ENCODE measurements at regions of chr12 and their contacts with region 1.

Region 1: DNA sequence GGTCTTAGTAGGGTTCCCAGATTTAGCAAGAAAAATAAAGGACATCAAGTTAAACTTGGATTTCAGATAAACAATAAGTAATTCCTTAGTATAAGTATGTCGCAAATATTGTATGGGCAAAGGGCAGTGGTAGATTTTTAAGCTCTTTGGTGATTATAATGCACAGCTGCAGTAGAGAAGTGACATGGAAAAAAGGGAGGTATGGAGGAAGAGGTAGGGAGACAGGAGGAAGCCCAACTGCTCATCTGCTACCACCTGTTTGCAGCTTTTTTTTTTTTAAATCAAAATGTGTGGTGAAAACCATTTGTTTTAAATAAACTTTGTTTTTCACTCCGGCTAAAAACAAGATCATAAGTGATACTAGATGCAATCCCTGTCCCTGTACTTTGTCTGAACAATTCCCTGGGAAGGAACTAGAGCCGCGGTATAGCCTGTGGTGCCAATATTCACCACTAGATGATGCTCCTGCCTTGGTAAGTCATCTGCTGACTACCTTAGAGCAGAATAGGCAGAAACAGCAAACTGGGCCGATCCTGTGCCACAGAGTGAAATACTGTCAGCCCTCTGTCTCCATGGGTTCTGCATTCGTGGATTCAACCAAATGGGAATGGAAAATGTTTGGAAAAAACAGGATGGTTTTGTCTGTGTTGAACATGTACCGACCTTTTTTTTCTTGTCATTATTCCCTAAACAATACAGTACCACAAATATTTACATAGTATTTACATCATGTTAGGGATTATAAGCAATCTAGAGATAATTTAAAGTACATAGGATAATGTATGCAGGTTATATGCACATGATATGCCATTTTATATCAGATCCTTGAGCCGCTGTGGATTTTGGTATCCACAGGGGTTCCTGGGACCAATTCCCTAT is 62.4 kb upstream of the PLBD1 start:
- DNase-seq: peak; percentile 42
- H3K4me3 Mint-ChIP-seq: no peak overlapping the region
- H3K27ac Mint-ChIP-seq: no peak overlapping the region
- H3K4me1 Mint-ChIP-seq: no peaks in the 10 kb centered on the region
- H3K27me3 Mint-ChIP-seq: peaks cover 10% of the 10 kb centered on the region

Region 2: DNA sequence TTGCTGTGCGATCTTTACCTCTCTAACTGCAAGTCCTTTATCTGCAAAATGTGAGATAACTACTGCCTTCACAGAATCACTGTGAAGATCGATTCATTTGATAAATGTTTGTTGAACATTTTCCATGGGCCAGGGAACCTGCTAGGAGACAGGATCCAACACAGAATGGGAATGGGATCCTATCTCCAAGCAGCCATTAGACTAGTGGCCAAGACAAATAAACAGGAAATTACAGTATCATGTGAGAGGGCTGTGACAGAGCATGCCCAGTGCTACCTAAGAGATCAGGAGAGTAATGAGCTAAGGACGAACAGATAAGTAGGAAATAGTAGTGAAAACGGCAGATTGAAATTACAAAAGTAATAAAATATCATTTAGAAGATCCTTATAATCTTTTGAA is 754.3 kb before region 1 on chr12:
- intact Hi-C with region 1: no loop called
- DNase-seq: no peak
- H3K4me3 Mint-ChIP-seq: no peak overlapping the region
- H3K27ac Mint-ChIP-seq: no peak overlapping the region
- H3K4me1 Mint-ChIP-seq: no peaks in the 10 kb centered on the region
- H3K27me3 Mint-ChIP-seq: peaks cover 5% of the 10 kb centered on the region

Region 3: GRCh38 chr12:14664510-14664909 is 34.4 kb after region 1 on chr12:
- intact Hi-C with region 1: loop called (anchors 1 kb)
- DNase-seq: no peak
- H3K4me3 Mint-ChIP-seq: no peak overlapping the region
- H3K27ac Mint-ChIP-seq: no peak overlapping the region
- H3K4me1 Mint-ChIP-seq: peaks cover 5% of the 10 kb centered on the region
- H3K27me3 Mint-ChIP-seq: peaks cover 7% of the 10 kb centered on the region

Region 4: GRCh38 chr12:14716848-14717444 is 86.9 kb after region 1 on chr12:
- intact Hi-C with region 1: loop called (anchors 1 kb)
- DNase-seq: peak; percentile 34
- H3K4me3 Mint-ChIP-seq: no peak overlapping the region
- H3K27ac Mint-ChIP-seq: no peak overlapping the region
- H3K4me1 Mint-ChIP-seq: no peaks in the 10 kb centered on the region
- H3K27me3 Mint-ChIP-seq: peaks cover 9% of the 10 kb centered on the region

Measured in activated T-helper 1 cell treated with anti-CD3 and anti-CD28 coated beads, Interleukin-12 subunit alpha, Interleukin-12 subunit beta, Interleukin-2, Interleukin-4 antibody, amounts not matched to agents 30 ng/mL and 10 ng/mL and 1 ng/mL, durations not matched to agents 14 hours and 24 hours and 36 hours (primary cell).